Mammary epithelial cell (primary cell): ENCODE measurements at regions of chr2 and their contacts with region 1.

Region 1: GRCh38 chr2:41959760-41960159 is 88.1 kb upstream of the PKDCC start:
- DNase-seq: no peak
- H3K4me3 ChIP-seq: no peak overlapping the region
- H3K27ac ChIP-seq: no peak overlapping the region
- H3K4me1 ChIP-seq: peaks cover 5% of the 10 kb centered on the region
- H3K27me3 ChIP-seq: peaks cover 2% of the 10 kb centered on the region
- CTCF ChIP-seq: no peak

Region 2: DNA sequence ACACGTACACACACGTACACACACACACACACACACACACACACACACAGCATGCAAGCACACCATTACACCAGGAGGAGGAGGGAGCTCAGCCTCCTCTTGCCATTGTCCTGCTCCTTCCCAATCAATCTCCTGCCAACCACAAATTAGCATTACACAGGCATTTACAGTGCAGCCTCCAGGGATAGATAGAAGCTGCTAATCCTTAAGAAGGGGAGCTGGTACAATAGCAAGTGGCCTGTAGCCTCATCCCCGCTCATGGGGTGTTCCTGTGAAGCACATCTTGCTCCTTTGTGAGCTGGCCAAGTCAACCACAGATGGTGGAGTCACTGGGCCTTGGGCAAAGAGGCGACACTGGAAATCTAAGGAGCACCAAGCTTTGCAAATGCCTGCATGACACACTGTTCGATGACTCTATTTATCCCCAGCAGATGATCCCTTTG is 22.3 kb before region 1 on chr2:
- CTCF ChIA-PET with region 1: no interaction called
- dilution Hi-C with region 1: no loop called
- in situ Hi-C with region 1: no loop called
- intact Hi-C with region 1: no loop called
- DNase-seq: no peak
- H3K4me3 ChIP-seq: no peak overlapping the region
- H3K27ac ChIP-seq: no peak overlapping the region
- H3K4me1 ChIP-seq: no peaks in the 10 kb centered on the region
- H3K27me3 ChIP-seq: no peaks in the 10 kb centered on the region
- CTCF ChIP-seq: no peak

Region 3: GRCh38 chr2:42046819-42047487 is 87.2 kb after region 1 on chr2:
- CTCF ChIA-PET with region 1: interaction called, 10 read pairs
- dilution Hi-C with region 1: no loop called
- in situ Hi-C with region 1: no loop called
- intact Hi-C with region 1: no loop called
- DNase-seq: no peak
- H3K4me3 ChIP-seq: no peak overlapping the region
- H3K27ac ChIP-seq: no peak overlapping the region
- H3K4me1 ChIP-seq: peaks cover 6% of the 10 kb centered on the region
- H3K27me3 ChIP-seq: peaks cover 26% of the 10 kb centered on the region
- CTCF ChIP-seq: no peak